ENCODE measurements at regions of chr1 and their contacts with region 1.

Region 1: GRCh38 chr1:62508187-62508758 is 71.4 kb downstream of the USP1 start:
- DNase-seq: peak; percentile 56
- H3K4me3 ChIP-seq: no peak overlapping the region
- H3K27ac ChIP-seq: no peak overlapping the region
- H3K4me1 ChIP-seq: no peaks in the 10 kb centered on the region
- H3K27me3 ChIP-seq: no peaks in the 10 kb centered on the region
- CTCF ChIP-seq: peak; percentile 31 to 46
- POLR2A ChIP-seq: no peak

Region 2: GRCh38 chr1:62487956-62488355 is 20.3 kb before region 1 on chr1:
- CTCF ChIA-PET with region 1: interaction called, 10 read pairs
- POLR2A ChIA-PET with region 1: no interaction called
- dilution Hi-C with region 1: no loop called
- intact Hi-C with region 1: no loop called
- DNase-seq: no peak
- H3K4me3 ChIP-seq: no peak overlapping the region
- H3K27ac ChIP-seq: no peak overlapping the region
- H3K4me1 ChIP-seq: no peaks in the 10 kb centered on the region
- H3K27me3 ChIP-seq: no peaks in the 10 kb centered on the region
- CTCF ChIP-seq: no peak
- POLR2A ChIP-seq: no peak

Region 3: DNA sequence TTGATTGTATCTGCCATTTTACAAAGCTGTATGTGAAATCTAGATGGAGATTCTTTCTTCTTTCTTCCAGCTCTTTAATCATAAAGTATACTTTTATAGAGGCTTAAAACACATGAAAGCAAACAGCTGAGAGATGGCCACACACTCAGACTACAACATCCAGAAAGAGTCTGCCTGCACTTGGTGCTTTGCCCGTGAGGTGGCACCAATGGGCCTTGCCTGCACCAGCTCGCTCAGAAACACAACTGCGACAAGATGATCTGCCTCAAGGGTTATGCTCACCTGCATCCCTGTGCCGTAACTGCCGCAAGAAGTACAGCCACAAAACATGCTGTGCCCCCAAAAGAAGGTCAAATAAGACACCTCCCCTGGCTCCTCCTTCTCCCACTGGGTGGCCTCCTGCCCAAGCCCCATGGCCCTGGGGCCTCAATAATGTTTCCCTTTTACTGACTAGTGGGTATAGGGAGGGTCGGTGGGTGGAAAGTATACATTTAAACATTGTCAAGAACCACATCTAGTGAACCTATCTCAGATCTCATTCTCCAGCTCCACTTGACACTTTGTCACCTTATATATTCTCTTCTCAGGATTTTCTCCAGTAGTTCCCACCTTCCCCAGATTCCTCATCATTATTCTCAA is 22.4 kb after region 1 on chr1:
- CTCF ChIA-PET with region 1: interaction called, 10 read pairs
- POLR2A ChIA-PET with region 1: no interaction called
- dilution Hi-C with region 1: no loop called
- intact Hi-C with region 1: no loop called
- DNase-seq: peak; percentile 29
- H3K4me3 ChIP-seq: no peak overlapping the region
- H3K27ac ChIP-seq: no peak overlapping the region
- H3K4me1 ChIP-seq: peaks cover 3% of the 10 kb centered on the region
- H3K27me3 ChIP-seq: no peaks in the 10 kb centered on the region
- CTCF ChIP-seq: peak; percentile 36 to 57
- POLR2A ChIP-seq: no peak

Region 4: GRCh38 chr1:62735491-62736171 is 227.4 kb after region 1 on chr1:
- CTCF ChIA-PET with region 1: interaction called, 10 read pairs
- POLR2A ChIA-PET with region 1: no interaction called
- dilution Hi-C with region 1: no loop called
- intact Hi-C with region 1: no loop called
- DNase-seq: no peak
- H3K4me3 ChIP-seq: no peak overlapping the region
- H3K27ac ChIP-seq: no peak overlapping the region
- H3K4me1 ChIP-seq: no peaks in the 10 kb centered on the region
- H3K27me3 ChIP-seq: peaks cover 0 to 6% of the 10 kb centered on the region in 2 experiments
- CTCF ChIP-seq: no peak
- POLR2A ChIP-seq: no peak

Measured in endothelial cell of umbilical vein (primary cell).